ENCODE measurements at regions of chr4 and their contacts with region 1.

Region 1: GRCh38 chr4:47914220-47914925 is at the start of gene NFXL1:
- DNase-seq: peak; percentile 99
- H3K4me3 ChIP-seq: peak within 1 kb of the TSS; percentile 75 to 87 (median 82)
- H3K27ac ChIP-seq: peak within 1 kb of the TSS; percentile 75 to 83 (median 80)
- H3K4me1 ChIP-seq: peaks cover 0 to 28% (median 13%) of the 10 kb centered on the region in 4 donors
- H3K27me3 ChIP-seq: no peaks in the 10 kb centered on the region
- CTCF ChIP-seq: no peak
- EP300 ChIP-seq: no peak
- POLR2A ChIP-seq: peak; percentile 56 to 74
- total RNA-seq, gene NFXL1: 8.0 to 20.5 (median 15.8) TPM

Region 2: DNA sequence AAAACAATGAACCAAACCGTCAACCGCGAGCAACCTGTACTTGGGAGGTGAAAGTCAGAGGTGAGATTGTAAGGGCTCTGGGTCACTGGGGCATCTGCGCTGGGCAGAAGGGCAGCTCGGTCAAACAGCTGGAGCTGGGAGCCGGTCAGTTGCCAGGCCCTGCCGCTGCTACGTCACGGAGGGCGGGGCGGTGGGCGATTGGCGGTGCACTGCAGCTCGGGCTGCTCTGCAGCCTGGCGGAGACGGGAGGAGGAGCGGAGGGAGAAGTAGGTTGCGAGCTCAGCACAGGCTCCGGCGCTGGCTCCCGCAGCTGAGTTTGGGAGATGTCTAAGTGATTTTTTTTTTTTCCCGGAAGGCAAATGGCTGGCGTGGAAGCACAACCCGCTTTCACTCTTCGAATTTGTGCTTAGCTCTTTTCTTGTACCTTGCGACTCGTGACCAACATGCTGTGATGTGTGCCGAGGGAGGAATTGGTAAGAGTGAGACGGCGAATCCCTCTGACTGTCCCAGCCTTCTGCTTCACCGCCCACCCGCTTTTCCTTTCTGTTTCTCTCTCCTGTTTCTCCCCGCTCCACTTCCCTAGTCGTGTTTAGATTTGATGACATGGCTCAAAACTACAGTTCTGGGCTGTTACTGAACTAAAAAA is 429.2 kb before region 1 on chr4 and contains the start of gene ATP10D:
- intact Hi-C with region 1: loop called (anchors 5 kb)
- DNase-seq: peak; percentile 98
- H3K4me3 ChIP-seq: peak within 1 kb of the TSS; percentile 54 to 69 (median 60)
- H3K27ac ChIP-seq: peak within 1 kb of the TSS; percentile 90 to 94 (median 93)
- H3K4me1 ChIP-seq: peaks cover 0 to 29% (median 12%) of the 10 kb centered on the region in 4 donors
- H3K27me3 ChIP-seq: no peaks in the 10 kb centered on the region
- CTCF ChIP-seq: peak in 2 of 4 experiments; percentile 15 to 18
- EP300 ChIP-seq: peak in 1 of 4 donors; percentile 4
- POLR2A ChIP-seq: peak; percentile 75 to 76
- total RNA-seq, gene ATP10D: 16.8 to 21.0 (median 18.7) TPM

Region 3: GRCh38 chr4:47741200-47741599 is 173.2 kb before region 1 on chr4:
- intact Hi-C with region 1: no loop called
- DNase-seq: no peak
- H3K4me3 ChIP-seq: no peak overlapping the region
- H3K27ac ChIP-seq: no peak overlapping the region
- H3K4me1 ChIP-seq: no peaks in the 10 kb centered on the region
- H3K27me3 ChIP-seq: no peaks in the 10 kb centered on the region
- CTCF ChIP-seq: no peak
- EP300 ChIP-seq: no peak
- POLR2A ChIP-seq: no peak

Region 4: DNA sequence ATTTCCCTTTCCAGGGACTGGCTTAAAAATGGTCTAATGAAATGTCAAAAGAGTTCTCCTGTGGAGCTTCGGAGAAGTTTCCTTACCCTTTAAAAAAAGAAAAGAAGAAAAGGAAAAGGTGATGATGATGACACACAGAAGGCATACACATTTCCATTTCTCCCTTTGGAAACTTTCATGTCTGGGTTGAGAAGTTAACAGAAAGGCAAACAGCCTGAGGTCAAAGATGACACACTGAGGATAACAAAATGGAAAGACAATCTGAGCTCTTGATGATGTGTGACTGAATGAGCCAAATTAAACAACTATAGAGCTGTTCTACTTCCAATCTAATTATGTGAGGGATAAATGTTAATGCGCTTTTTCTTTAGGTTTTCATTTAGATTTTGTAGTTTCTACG is 32.1 kb before region 1 on chr4:
- intact Hi-C with region 1: no loop called
- DNase-seq: no peak
- H3K4me3 ChIP-seq: no peak overlapping the region
- H3K27ac ChIP-seq: no peak overlapping the region
- H3K4me1 ChIP-seq: no peaks in the 10 kb centered on the region
- H3K27me3 ChIP-seq: no peaks in the 10 kb centered on the region
- CTCF ChIP-seq: no peak
- EP300 ChIP-seq: no peak
- POLR2A ChIP-seq: no peak

Region 5: DNA sequence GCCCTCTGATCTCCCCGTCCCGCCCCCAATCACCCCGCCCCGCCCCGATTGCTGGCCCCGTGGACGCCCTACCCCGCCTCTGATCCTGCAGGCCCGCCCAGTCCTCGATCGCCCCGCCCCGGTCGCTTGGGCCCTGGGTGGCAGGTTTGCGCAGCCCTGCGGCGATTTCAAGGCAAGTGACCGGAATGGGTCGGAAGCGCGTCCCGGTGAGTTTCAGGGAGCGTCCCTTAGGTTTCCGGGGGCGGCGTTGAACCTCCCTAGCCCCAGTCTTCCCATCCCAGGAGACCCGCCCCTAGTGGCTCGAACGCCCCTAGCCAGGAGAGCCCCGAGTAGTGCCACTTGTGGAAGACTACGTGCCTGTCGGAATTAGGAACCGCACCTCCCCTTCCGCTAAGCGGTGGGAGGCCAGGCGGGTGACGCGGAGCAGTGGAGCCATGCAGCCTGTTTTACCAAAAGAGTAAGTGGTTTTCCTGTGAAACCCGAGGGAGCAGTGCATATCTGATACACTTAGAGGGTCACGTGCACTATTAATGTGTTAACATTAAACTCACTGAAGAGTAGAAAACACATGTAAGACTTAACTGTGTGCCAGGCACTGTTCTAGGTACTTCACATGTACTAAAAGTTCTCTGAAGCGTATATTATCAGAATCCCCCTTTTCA is 355.6 kb after region 1 on chr4:
- intact Hi-C with region 1: loop called (anchors 10 kb)
- DNase-seq: peak; percentile 95
- H3K4me3 ChIP-seq: peak overlapping the region; percentile 84 to 92 (median 89)
- H3K27ac ChIP-seq: peak overlapping the region; percentile 76 to 81 (median 79)
- H3K4me1 ChIP-seq: peaks cover 0 to 9% (median 0%) of the 10 kb centered on the region in 4 donors
- H3K27me3 ChIP-seq: no peaks in the 10 kb centered on the region
- CTCF ChIP-seq: peak in 3 of 4 experiments; percentile 12 to 22 (median 17)
- EP300 ChIP-seq: no peak
- POLR2A ChIP-seq: peak in 1 of 2 donors; percentile 5

Region 6: GRCh38 chr4:48375651-48376293 is 461.4 kb after region 1 on chr4:
- intact Hi-C with region 1: no loop called
- DNase-seq: no peak
- H3K4me3 ChIP-seq: no peak overlapping the region
- H3K27ac ChIP-seq: no peak overlapping the region
- H3K4me1 ChIP-seq: peaks cover 0 to 29% (median 4%) of the 10 kb centered on the region in 4 donors
- H3K27me3 ChIP-seq: no peaks in the 10 kb centered on the region
- CTCF ChIP-seq: no peak
- EP300 ChIP-seq: no peak
- POLR2A ChIP-seq: no peak